RWPE1 (cell line): ENCODE measurements at regions of chr2 and their contacts with region 1.

Region 1: GRCh38 chr2:191757208-191757607 is 79.3 kb downstream of the NABP1 start:
- DNase-seq: no peak
- H3K27ac ChIP-seq: no peak overlapping the region
- CTCF ChIP-seq: no peak

Region 2: DNA sequence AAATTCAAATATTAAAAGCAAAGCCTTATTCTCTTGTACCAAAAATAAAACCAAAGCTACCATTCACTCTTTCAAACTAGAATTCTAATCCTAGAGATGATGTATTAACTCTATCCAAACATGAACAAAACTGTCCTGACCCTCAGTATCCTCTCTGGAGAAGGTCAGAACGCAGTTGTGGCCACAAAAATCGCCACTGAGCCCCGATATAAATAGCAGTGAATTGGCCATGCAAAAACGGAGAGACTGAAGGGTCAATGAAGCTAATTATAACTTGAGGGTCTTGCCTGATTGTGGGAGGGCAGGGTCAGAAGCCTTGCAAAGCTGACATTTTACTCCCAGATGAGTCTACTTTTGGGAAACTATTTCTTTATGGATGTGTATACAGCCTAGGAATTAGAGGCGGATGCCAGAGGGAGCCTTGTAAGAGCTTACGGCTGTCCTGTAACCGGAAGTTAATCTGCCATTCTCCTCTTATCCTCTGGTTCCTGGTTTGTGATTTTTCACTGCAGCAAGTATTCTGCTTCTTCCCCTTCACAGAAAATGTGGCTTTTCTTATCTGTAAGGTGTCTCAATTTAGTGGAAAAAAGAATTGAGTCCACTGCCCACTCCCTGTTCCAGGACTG is 61.6 kb after region 1 on chr2:
- CTCF ChIA-PET with region 1: interaction called, 10 read pairs
- POLR2A ChIA-PET with region 1: no interaction called
- DNase-seq: no peak
- H3K27ac ChIP-seq: no peak overlapping the region
- CTCF ChIP-seq: no peak